Activated B cell treated with CpG ODN at 0.5 μM for 24 hours (primary cell): ENCODE measurements at regions of chr16 and their contacts with region 1.

Region 1: DNA sequence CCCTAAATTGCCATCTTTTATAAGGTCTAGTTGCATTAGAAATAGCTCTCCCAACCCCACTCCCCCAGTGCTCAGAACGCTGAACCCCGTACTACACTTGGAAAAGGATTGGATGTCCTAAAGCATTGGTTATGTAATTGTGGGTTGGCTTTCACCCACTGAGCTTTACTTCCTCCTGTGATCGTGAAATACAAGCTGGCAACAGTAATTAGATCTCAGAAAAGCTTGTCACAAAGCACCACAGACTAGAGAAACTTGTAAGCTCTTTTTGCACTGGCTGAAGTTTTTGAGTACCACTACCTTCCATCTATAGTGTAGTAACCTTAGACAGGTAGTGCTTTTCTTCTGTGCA is 54.4 kb downstream of the SIAH1 start:
- DNase-seq: no peak
- ATAC-seq: no peak
- H3K4me3 Mint-ChIP-seq: no peak overlapping the region
- H3K27ac Mint-ChIP-seq: no peak overlapping the region
- H3K4me1 Mint-ChIP-seq: no peaks in the 10 kb centered on the region
- H3K27me3 Mint-ChIP-seq: no peaks in the 10 kb centered on the region
- CTCF ChIP-seq: no peak

Region 2: DNA sequence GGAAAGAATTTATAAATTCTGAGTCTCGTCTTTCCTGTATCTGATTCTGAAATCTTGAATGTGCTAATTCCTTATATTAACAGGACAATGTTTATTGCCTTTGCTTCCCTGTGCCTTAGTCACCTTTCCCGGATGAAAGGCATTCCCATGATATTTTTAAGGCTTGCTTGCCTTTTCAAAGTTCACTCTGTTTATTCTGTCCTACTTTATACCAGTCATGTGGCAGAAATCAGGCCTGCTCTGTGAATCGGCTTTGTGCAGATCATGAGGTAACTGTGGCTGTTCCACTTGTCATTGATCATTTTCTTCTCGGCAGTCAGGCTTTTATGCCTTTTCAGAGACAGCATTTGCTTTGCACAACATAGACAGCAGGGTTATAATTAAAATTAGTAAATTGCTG is 54.7 kb before region 1 on chr16:
- CTCF ChIA-PET with region 1: no interaction called
- POLR2A ChIA-PET with region 1: no interaction called
- intact Hi-C with region 1: loop called (anchors 10 kb)
- DNase-seq: no peak
- ATAC-seq: no peak
- H3K4me3 Mint-ChIP-seq: no peak overlapping the region
- H3K27ac Mint-ChIP-seq: no peak overlapping the region
- H3K4me1 Mint-ChIP-seq: no peaks in the 10 kb centered on the region
- H3K27me3 Mint-ChIP-seq: no peaks in the 10 kb centered on the region
- CTCF ChIP-seq: no peak